ENCODE measurements at regions of chr12 and their contacts with region 1.

Region 1: GRCh38 chr12:751192-751998 is 984 bp upstream of the WNK1 start:
- DNase-seq: peak; percentile 64 to 94 (median 78)
- ATAC-seq: peak; percentile 23
- H3K4me3 ChIP-seq: peak overlapping the region; percentile 81
- H3K4me3 Mint-ChIP-seq: no peak overlapping the region
- H3K27ac ChIP-seq: peak overlapping the region; percentile 61 to 87
- H3K27ac Mint-ChIP-seq: no peak overlapping the region
- H3K4me1 ChIP-seq: peaks cover 20% of the 10 kb centered on the region
- H3K4me1 Mint-ChIP-seq: peaks cover 11% of the 10 kb centered on the region
- H3K27me3 ChIP-seq: no peaks in the 10 kb centered on the region
- H3K27me3 Mint-ChIP-seq: no peaks in the 10 kb centered on the region
- CTCF ChIP-seq: peak; percentile 74

Region 2: GRCh38 chr12:575948-576612 is 175.3 kb before region 1 on chr12:
- CTCF ChIA-PET with region 1: interaction called, 31 read pairs
- POLR2A ChIA-PET with region 1: interaction called, 33 read pairs
- intact Hi-C with region 1: loop called (anchors 2 kb)
- DNase-seq: peak; percentile 59 to 91 (median 83)
- ATAC-seq: peak; percentile 99
- H3K4me3 ChIP-seq: peak overlapping the region; percentile 34
- H3K4me3 Mint-ChIP-seq: no peak overlapping the region
- H3K27ac ChIP-seq: no peak overlapping the region
- H3K27ac Mint-ChIP-seq: peak overlapping the region; percentile 22
- H3K4me1 ChIP-seq: peaks cover 20% of the 10 kb centered on the region
- H3K4me1 Mint-ChIP-seq: peaks cover 24% of the 10 kb centered on the region
- H3K27me3 ChIP-seq: no peaks in the 10 kb centered on the region
- H3K27me3 Mint-ChIP-seq: no peaks in the 10 kb centered on the region
- CTCF ChIP-seq: peak; percentile 98

Region 3: DNA sequence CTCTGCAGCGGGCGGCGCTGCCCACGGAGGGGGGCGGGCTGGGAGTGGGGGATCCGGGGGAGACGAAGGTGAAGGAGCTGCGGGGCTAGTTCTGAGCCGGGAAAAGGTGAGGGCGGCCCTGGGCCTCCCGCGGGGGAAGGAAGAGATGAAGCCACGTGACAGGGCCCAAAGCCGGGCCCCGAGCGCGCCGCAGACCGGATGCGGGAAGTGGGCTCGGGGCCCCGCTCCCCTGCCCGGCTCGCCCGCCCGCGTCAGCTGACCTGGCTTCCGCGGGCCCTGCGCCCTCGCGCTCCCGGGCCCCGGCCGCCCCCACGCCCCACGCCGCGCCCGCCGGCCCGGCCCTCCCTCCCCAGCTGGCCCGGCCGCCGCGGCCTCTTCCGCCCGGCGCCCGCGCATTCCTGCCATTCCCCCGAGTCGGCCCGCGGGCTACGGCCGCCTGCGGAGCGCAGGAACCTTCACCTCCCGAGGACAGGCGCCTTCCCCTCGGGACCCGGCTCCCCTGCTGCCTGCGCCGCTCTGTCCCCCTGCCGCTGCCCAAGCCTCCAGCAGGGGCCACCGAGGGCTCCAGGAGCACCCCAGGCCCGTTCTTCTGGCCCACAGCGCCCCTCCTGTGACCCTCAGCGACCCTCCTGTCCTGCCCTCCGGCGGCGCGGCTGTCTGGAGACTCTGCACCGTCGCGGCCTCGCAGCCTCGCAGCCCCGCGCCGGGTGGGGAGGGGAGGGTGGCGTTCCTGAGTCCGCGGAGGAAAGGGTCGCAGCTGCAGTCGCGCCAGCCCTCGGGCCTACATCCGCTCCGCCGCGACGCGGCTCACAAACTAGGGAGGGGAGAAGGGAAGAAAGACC is 108.5 kb before region 1 on chr12:
- CTCF ChIA-PET with region 1: interaction called, 8 read pairs
- POLR2A ChIA-PET with region 1: interaction called, 68 read pairs
- intact Hi-C with region 1: loop called (anchors 2 kb)
- DNase-seq: peak; percentile 49 to 92 (median 76)
- ATAC-seq: peak; percentile 74
- H3K4me3 ChIP-seq: peak overlapping the region; percentile 67
- H3K4me3 Mint-ChIP-seq: peak overlapping the region; percentile 84
- H3K27ac ChIP-seq: peak overlapping the region; percentile 84 to 85
- H3K27ac Mint-ChIP-seq: peak overlapping the region; percentile 93
- H3K4me1 ChIP-seq: peaks cover 63% of the 10 kb centered on the region
- H3K4me1 Mint-ChIP-seq: peaks cover 63% of the 10 kb centered on the region
- H3K27me3 ChIP-seq: no peaks in the 10 kb centered on the region
- H3K27me3 Mint-ChIP-seq: no peaks in the 10 kb centered on the region
- CTCF ChIP-seq: peak; percentile 15

Region 4: GRCh38 chr12:685388-685787 is 66.0 kb before region 1 on chr12:
- CTCF ChIA-PET with region 1: interaction called, 31 read pairs
- POLR2A ChIA-PET with region 1: interaction called, 67 read pairs
- intact Hi-C with region 1: loop called (anchors 1 to 5 kb)
- DNase-seq: peak; percentile 70 to 96 (median 78)
- ATAC-seq: peak; percentile 92
- H3K4me3 ChIP-seq: peak overlapping the region; percentile 7
- H3K4me3 Mint-ChIP-seq: peak overlapping the region; percentile 39
- H3K27ac ChIP-seq: peak overlapping the region; percentile 75 to 93
- H3K27ac Mint-ChIP-seq: peak overlapping the region; percentile 91
- H3K4me1 ChIP-seq: peaks cover 27% of the 10 kb centered on the region
- H3K4me1 Mint-ChIP-seq: peaks cover 60% of the 10 kb centered on the region
- H3K27me3 ChIP-seq: no peaks in the 10 kb centered on the region
- H3K27me3 Mint-ChIP-seq: no peaks in the 10 kb centered on the region
- CTCF ChIP-seq: no peak

Region 5: DNA sequence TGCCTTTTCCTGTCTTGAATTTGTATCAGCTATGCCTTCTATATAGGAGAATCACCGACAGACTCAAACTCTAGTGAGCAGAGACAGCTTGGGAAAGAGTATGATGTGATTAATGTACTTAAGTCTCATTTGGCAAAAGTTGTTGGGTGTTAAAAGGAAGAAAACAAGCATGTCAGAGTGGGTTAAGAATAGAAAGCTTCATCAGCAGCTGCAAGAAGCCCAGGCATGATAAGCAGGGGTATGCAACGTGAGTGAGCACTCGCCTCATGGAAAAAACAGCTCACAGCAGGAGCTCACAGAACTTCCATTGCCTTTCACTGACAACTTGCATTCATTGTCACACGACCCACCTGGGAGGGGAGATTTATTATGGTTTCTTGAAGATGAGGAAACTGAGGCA is 34.9 kb before region 1 on chr12:
- CTCF ChIA-PET with region 1: interaction called, 3 read pairs
- POLR2A ChIA-PET with region 1: interaction called, 3 read pairs
- intact Hi-C with region 1: loop called in 1 of 2 experiments (anchors 5 kb)
- DNase-seq: no peak
- ATAC-seq: no peak
- H3K4me3 ChIP-seq: no peak overlapping the region
- H3K4me3 Mint-ChIP-seq: no peak overlapping the region
- H3K27ac ChIP-seq: no peak overlapping the region
- H3K27ac Mint-ChIP-seq: no peak overlapping the region
- H3K4me1 ChIP-seq: peaks cover 22% of the 10 kb centered on the region
- H3K4me1 Mint-ChIP-seq: peaks cover 42% of the 10 kb centered on the region
- H3K27me3 ChIP-seq: no peaks in the 10 kb centered on the region
- H3K27me3 Mint-ChIP-seq: no peaks in the 10 kb centered on the region
- CTCF ChIP-seq: no peak

Region 6: GRCh38 chr12:789852-790563 is 38.6 kb after region 1 on chr12:
- CTCF ChIA-PET with region 1: interaction called, 6 read pairs
- POLR2A ChIA-PET with region 1: interaction called, 5 read pairs
- intact Hi-C with region 1: loop called in 1 of 2 experiments (anchors 5 kb)
- DNase-seq: no peak
- ATAC-seq: peak; percentile 26
- H3K4me3 ChIP-seq: no peak overlapping the region
- H3K4me3 Mint-ChIP-seq: peak overlapping the region; percentile 64
- H3K27ac ChIP-seq: no peak overlapping the region
- H3K27ac Mint-ChIP-seq: peak overlapping the region; percentile 62
- H3K4me1 ChIP-seq: peaks cover 36% of the 10 kb centered on the region
- H3K4me1 Mint-ChIP-seq: peaks cover 91% of the 10 kb centered on the region
- H3K27me3 ChIP-seq: no peaks in the 10 kb centered on the region
- H3K27me3 Mint-ChIP-seq: no peaks in the 10 kb centered on the region
- CTCF ChIP-seq: no peak

Region 7: DNA sequence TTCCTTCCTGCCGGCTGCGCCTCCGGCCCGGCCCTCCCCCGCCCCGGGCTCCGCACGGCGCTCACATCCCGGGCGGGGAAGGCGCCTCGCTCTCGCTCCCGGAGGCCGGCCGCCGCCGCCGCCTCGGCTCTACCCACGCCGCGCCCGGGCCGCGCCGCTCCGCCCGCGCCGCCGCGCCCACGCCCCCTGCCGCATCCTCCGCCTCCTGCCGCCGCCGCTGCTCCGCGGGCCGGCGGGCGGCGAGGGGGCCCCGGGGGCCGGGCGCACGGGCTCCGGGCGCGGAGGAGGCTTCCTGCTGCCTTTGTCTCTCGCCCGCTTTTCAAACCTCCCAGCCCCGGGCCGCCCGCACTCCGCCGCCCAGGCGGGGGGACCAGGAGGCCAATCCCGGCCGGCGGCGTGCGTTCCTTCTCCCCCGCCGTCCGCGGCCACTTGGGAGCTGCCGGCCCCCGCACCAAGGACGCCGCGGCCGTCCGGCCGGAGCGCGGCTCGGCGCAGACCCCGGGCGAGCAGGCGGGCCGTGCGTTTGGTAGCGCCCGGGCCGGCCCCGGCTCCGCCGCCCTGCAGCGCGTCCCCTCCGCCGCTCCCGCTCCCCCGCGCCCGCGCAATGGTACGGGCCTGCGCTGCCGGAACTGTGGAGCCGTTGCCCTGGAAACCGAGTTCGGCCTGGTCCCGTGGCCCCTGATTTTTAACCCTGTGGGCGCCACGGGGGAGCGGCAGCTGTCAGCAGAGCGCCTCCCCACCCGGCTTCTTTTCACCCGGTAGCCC is 843.0 kb after region 1 on chr12 and contains the start of gene FBXL14:
- CTCF ChIA-PET with region 1: no interaction called
- POLR2A ChIA-PET with region 1: interaction called, 3 read pairs
- intact Hi-C with region 1: loop called in 1 of 2 experiments (anchors 10 kb)
- DNase-seq: peak; percentile 84 to 96 (median 90)
- ATAC-seq: peak; percentile 56
- H3K4me3 ChIP-seq: peak within 1 kb of the TSS; percentile 79
- H3K4me3 Mint-ChIP-seq: peak within 1 kb of the TSS; percentile 95
- H3K27ac ChIP-seq: peak within 1 kb of the TSS; percentile 73 to 88
- H3K27ac Mint-ChIP-seq: peak within 1 kb of the TSS; percentile 91
- H3K4me1 ChIP-seq: peaks cover 37% of the 10 kb centered on the region
- H3K4me1 Mint-ChIP-seq: peaks cover 55% of the 10 kb centered on the region
- H3K27me3 ChIP-seq: no peaks in the 10 kb centered on the region
- H3K27me3 Mint-ChIP-seq: no peaks in the 10 kb centered on the region
- CTCF ChIP-seq: no peak
- total RNA-seq, gene FBXL14: 32.3 to 33.6 TPM